Common myeloid progenitor, CD34-positive (primary cell): ENCODE measurements at regions of chr2 and their contacts with region 1.

Region 1: DNA sequence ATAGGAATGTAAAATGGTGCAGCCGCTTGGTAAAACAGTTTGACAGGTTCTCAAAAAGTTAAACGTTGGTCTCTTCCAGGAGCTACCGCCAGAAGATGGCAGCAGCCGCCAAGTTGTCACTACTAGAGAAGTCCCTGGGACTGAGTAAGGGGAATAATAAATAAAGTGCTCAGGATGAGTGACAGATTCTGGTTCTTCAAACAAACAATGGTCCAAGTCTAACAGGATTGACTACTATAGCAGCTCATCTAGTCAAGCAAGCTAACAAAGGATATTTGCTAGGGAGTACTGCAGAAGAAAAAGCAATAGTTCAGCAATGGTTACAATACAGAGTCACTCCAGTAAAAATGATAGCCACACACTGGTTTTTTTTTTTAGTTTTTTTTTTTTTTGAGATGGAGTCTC is 3.8 kb upstream of the ANAPC1 start:
- DNase-seq: peak; percentile 77 to 85 (median 81)
- H3K4me3 ChIP-seq: no peak overlapping the region
- H3K27ac ChIP-seq: no peak overlapping the region
- H3K4me1 ChIP-seq: peaks cover 0 to 12% (median 7%) of the 10 kb centered on the region in 4 experiments
- H3K27me3 ChIP-seq: no peaks in the 10 kb centered on the region

Region 2: GRCh38 chr2:111667542-111668273 is 220.1 kb before region 1 on chr2:
- CTCF ChIA-PET with region 1: no interaction called
- POLR2A ChIA-PET with region 1: no interaction called
- DNase-seq: peak; percentile 29 to 62 (median 55)
- H3K4me3 ChIP-seq: no peak overlapping the region
- H3K27ac ChIP-seq: no peak overlapping the region
- H3K4me1 ChIP-seq: peaks cover 0 to 18% (median 0%) of the 10 kb centered on the region in 4 experiments
- H3K27me3 ChIP-seq: no peaks in the 10 kb centered on the region

Region 3: GRCh38 chr2:111694700-111695101 is 193.1 kb before region 1 on chr2:
- CTCF ChIA-PET with region 1: no interaction called
- POLR2A ChIA-PET with region 1: no interaction called
- DNase-seq: no peak
- H3K4me3 ChIP-seq: no peak overlapping the region
- H3K27ac ChIP-seq: no peak overlapping the region
- H3K4me1 ChIP-seq: peaks cover 14 to 22% (median 17%) of the 10 kb centered on the region in 4 experiments
- H3K27me3 ChIP-seq: no peaks in the 10 kb centered on the region

Region 4: GRCh38 chr2:111897924-111898702 is 10.3 kb after region 1 on chr2 and contains the start of gene MERTK:
- CTCF ChIA-PET with region 1: interaction called, 20 read pairs
- POLR2A ChIA-PET with region 1: no interaction called
- DNase-seq: peak; percentile 90 to 96 (median 96)
- H3K4me3 ChIP-seq: peak within 1 kb of the TSS; percentile 84 to 92 (median 90)
- H3K27ac ChIP-seq: peak within 1 kb of the TSS; percentile 49 to 76
- H3K4me1 ChIP-seq: peaks cover 8 to 29% (median 24%) of the 10 kb centered on the region in 4 experiments
- H3K27me3 ChIP-seq: peaks cover 0 to 2% (median 0%) of the 10 kb centered on the region in 5 experiments

Region 5: GRCh38 chr2:111919794-111920608 is 32.2 kb after region 1 on chr2:
- CTCF ChIA-PET with region 1: interaction called, 10 read pairs
- POLR2A ChIA-PET with region 1: no interaction called
- DNase-seq: no peak
- H3K4me3 ChIP-seq: no peak overlapping the region
- H3K27ac ChIP-seq: no peak overlapping the region
- H3K4me1 ChIP-seq: peaks cover 0 to 10% (median 5%) of the 10 kb centered on the region in 4 experiments
- H3K27me3 ChIP-seq: no peaks in the 10 kb centered on the region

Region 6: DNA sequence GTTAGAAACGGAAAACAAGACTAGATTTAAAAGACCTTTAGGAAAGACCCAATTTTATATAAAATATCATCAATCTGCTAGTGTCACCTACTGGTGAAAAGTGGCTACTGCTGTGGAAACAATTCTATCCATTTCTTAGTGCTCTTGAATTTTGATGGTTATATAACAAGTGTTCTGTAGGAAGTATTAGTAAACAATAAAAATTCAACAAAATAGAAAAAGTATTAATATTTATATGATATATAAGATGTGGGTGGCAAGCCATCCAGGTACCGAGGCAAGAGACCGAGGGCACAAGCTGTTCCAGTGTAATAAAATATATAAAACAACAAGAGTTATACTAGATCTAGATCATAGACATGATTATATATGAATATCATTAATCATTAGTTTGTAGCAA is 161.1 kb after region 1 on chr2:
- CTCF ChIA-PET with region 1: interaction called, 35 read pairs
- POLR2A ChIA-PET with region 1: no interaction called
- DNase-seq: peak; percentile 72 to 84 (median 78)
- H3K4me3 ChIP-seq: no peak overlapping the region
- H3K27ac ChIP-seq: no peak overlapping the region
- H3K4me1 ChIP-seq: peaks cover 0 to 9% (median 7%) of the 10 kb centered on the region in 4 experiments
- H3K27me3 ChIP-seq: no peaks in the 10 kb centered on the region